Colonic mucosa (tissue), 4 donors: ENCODE measurements at regions of chr1 and their contacts with region 1.

Region 1: GRCh38 chr1:151198255-151199127 is at the start of gene PIP5K1A:
- DNase-seq: peak; percentile 99
- H3K4me3 ChIP-seq: peak within 1 kb of the TSS; percentile 87
- H3K27ac ChIP-seq: peak within 1 kb of the TSS; percentile 88
- H3K4me1 ChIP-seq: peaks cover 14% of the 10 kb centered on the region
- H3K27me3 ChIP-seq: no peaks in the 10 kb centered on the region
- CTCF ChIP-seq: no peak
- total RNA-seq, gene PIP5K1A: 33.3 to 38.9 TPM

Region 2: DNA sequence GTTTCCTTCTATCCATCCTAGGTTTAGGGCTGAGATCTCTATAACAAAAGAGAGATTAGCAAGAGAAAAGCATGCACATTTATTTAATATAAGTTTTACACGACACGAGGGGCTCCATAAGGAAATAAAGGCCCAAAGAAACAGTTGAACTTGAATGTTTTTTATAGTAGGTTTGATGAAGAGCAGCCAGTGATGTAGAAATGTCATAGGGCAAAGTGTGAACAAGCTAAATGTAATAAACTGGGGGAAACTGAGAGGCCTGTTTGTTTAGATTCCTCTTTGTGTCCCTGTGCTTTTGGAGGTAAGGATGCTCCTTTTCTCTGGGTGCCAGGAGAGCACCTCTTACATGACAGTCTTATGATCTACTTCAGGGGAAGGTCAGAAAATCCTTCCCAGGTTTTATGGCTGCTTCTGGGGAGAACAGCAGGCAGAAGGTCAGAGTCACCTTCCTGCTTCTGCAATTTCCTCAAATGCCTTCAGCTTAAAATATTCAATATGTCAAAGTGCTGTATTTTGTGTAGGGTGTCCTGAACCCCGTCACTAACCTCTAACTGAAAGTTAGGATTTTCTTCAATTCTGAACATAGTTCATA is 468.3 kb before region 1 on chr1:
- intact Hi-C with region 1: no loop called
- DNase-seq: no peak
- H3K4me3 ChIP-seq: no peak overlapping the region
- H3K27ac ChIP-seq: no peak overlapping the region
- H3K4me1 ChIP-seq: no peaks in the 10 kb centered on the region
- H3K27me3 ChIP-seq: no peaks in the 10 kb centered on the region
- CTCF ChIP-seq: no peak

Region 3: GRCh38 chr1:150925816-150926741 is 272.4 kb before region 1 on chr1 and contains the start of gene SETDB1:
- intact Hi-C with region 1: no loop called
- DNase-seq: peak; percentile 97
- H3K4me3 ChIP-seq: peak within 1 kb of the TSS; percentile 60
- H3K27ac ChIP-seq: peak within 1 kb of the TSS; percentile 74
- H3K4me1 ChIP-seq: no peaks in the 10 kb centered on the region
- H3K27me3 ChIP-seq: no peaks in the 10 kb centered on the region
- CTCF ChIP-seq: no peak
- total RNA-seq, gene SETDB1: 28.2 to 32.8 TPM

Region 4: GRCh38 chr1:151254217-151255213 is 56.0 kb after region 1 on chr1 and contains the start of gene PSMD4:
- intact Hi-C with region 1: loop called (anchors 5 kb)
- DNase-seq: peak; percentile 96
- H3K4me3 ChIP-seq: peak within 1 kb of the TSS; percentile 96
- H3K27ac ChIP-seq: peak within 1 kb of the TSS; percentile 81
- H3K4me1 ChIP-seq: no peaks in the 10 kb centered on the region
- H3K27me3 ChIP-seq: no peaks in the 10 kb centered on the region
- CTCF ChIP-seq: no peak
- total RNA-seq, gene PSMD4: 103 to 158 TPM